ENCODE measurements at regions of chr20 and their contacts with region 1.

Region 1: DNA sequence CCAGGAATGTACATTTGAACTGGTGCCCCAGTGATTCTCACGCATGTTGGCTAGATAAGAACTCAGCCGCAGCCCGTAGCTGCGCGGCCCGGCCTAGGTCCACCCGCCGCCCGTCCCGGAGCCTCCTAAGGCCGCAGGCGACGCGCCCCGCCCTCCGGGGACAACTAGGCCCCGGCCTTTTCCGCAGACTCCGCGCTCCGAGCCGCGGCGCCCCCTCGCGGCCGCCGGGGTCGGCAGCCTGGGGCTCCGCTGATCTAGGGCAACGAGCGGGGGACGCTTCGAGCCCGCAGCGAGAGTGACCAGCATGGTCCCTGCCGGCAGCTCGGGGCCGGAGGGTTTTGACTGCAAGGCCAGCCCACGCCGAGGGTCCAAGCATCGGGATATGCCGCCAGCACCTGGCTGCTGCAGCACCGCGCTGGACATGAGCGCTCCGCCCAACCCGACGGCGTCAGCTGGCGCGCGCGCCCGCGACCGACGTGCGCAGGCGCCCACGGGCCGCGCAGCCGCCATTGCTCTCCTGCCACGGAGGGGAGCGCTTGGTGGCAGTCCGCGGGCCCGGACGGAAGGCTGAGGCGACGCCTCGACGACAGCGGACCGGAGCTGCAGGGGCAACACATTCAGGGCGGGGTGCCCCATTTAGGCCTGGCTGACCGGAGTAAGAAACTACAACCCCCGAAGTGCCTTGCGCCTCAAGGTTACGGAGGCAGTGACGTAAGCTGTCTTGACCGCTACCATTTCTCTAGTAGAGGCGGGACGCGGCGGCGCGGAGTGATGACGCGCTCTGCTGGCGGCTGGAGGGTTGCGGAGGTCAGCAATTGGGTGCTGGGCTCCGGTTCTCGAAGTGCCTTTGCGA is at the start of gene AP5S1:
- DNase-seq: peak; percentile 97
- ATAC-seq: peak; percentile 77
- H3K4me3 ChIP-seq: peak within 1 kb of the TSS; percentile 91 to 95 (median 94)
- H3K27ac ChIP-seq: peak within 1 kb of the TSS; percentile 96
- H3K4me1 ChIP-seq: peaks cover 32% of the 10 kb centered on the region
- H3K27me3 ChIP-seq: peaks cover 1 to 10% of the 10 kb centered on the region in 2 experiments; a peak in 2 of 5 replicates
- CTCF ChIP-seq: peak; percentile 97
- EP300 ChIP-seq: peak in 1 of 2 experiments; percentile 54; a peak in 2 of 4 replicates
- POLR2A ChIP-seq: peak; percentile 97
- RAD21 ChIP-seq: peak; percentile 100
- total RNA-seq, gene AP5S1: 23.2 and 23.7 TPM in 2 replicates

Region 2: GRCh38 chr20:3721912-3722311 is 98.4 kb before region 1 on chr20:
- CTCF ChIA-PET with region 1: no interaction called
- POLR2A ChIA-PET with region 1: no interaction called
- in situ Hi-C with region 1: no loop called
- intact Hi-C with region 1: no loop called
- DNase-seq: no peak
- ATAC-seq: no peak
- H3K4me3 ChIP-seq: no peak overlapping the region
- H3K27ac ChIP-seq: no peak overlapping the region
- H3K4me1 ChIP-seq: no peaks in the 10 kb centered on the region
- H3K27me3 ChIP-seq: peaks cover 0 to 9% of the 10 kb centered on the region in 2 experiments
- CTCF ChIP-seq: no peak
- EP300 ChIP-seq: no peak
- POLR2A ChIP-seq: no peak
- RAD21 ChIP-seq: no peak

Region 3: GRCh38 chr20:3753098-3753980 is 66.9 kb before region 1 on chr20:
- CTCF ChIA-PET with region 1: interaction called, 7 read pairs
- POLR2A ChIA-PET with region 1: no interaction called
- in situ Hi-C with region 1: no loop called
- intact Hi-C with region 1: loop called (anchors 2 kb)
- DNase-seq: peak; percentile 71
- ATAC-seq: peak; percentile 54
- H3K4me3 ChIP-seq: no peak overlapping the region
- H3K27ac ChIP-seq: no peak overlapping the region
- H3K4me1 ChIP-seq: peaks cover 19% of the 10 kb centered on the region
- H3K27me3 ChIP-seq: peaks cover 2 to 9% of the 10 kb centered on the region in 2 experiments; a peak in 4 of 5 replicates
- CTCF ChIP-seq: peak; percentile 91
- EP300 ChIP-seq: no peak
- POLR2A ChIP-seq: no peak
- RAD21 ChIP-seq: peak; percentile 84

Region 4: DNA sequence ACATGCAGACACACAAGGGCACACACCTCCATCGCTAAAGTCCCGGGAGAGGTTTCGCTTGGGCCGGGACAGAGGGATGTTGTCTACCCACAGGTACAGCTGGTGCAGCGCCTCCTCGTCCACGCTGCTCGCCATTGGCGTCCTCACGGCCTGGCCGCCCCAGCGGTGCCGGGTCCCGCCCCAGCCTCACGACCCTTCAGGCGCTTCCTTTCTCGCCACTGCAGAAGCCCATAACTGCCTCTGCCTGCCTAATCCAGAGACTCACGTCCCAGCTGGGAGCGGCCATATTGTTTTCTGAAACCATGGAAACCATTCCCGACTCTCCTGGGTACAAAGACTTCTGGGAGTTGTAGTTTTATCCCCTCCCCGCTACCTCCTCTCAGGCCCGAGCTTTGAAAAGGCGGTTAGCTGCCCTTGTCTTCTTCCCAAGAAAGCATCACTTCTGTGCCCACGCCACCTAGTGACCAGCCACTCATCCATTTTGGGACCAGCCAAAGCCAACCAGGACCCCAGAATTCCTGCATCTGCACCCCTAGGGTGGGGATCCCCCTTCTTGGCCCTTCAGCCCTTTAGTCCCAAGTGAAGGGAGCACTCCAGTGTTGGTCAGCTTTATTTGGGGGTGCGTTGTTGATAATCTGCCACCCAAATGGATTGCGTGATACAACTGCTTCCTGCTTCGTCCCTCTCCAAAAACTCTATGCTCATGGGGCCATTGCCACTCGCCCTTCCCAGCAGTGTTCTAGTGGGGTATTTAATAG is 38.9 kb before region 1 on chr20 and contains the start of gene SPEF1:
- CTCF ChIA-PET with region 1: interaction called, 119 read pairs
- POLR2A ChIA-PET with region 1: interaction called, 134 read pairs
- in situ Hi-C with region 1: loop called (anchors 5 kb)
- intact Hi-C with region 1: no loop called
- DNase-seq: peak; percentile 98
- ATAC-seq: peak; percentile 80
- H3K4me3 ChIP-seq: peak within 1 kb of the TSS; percentile 51 to 75 (median 59); a peak in 5 of 6 replicates
- H3K27ac ChIP-seq: no peak within 1 kb of the TSS
- H3K4me1 ChIP-seq: peaks cover 76% of the 10 kb centered on the region
- H3K27me3 ChIP-seq: peaks cover 2 to 31% of the 10 kb centered on the region in 2 experiments
- CTCF ChIP-seq: peak; percentile 79
- EP300 ChIP-seq: no peak
- POLR2A ChIP-seq: no peak
- RAD21 ChIP-seq: peak; percentile 63
- total RNA-seq, gene SPEF1: 0.27 and 0.32 TPM in 2 replicates

Region 5: GRCh38 chr20:3795511-3796468 is 24.5 kb before region 1 on chr20 and contains the start of gene CDC25B:
- CTCF ChIA-PET with region 1: interaction called, 3 read pairs
- POLR2A ChIA-PET with region 1: interaction called, 134 read pairs
- in situ Hi-C with region 1: no loop called
- intact Hi-C with region 1: loop called (anchors 1 kb)
- DNase-seq: peak; percentile 91
- ATAC-seq: peak; percentile 89
- H3K4me3 ChIP-seq: peak within 1 kb of the TSS; percentile 76 to 88 (median 85)
- H3K27ac ChIP-seq: peak within 1 kb of the TSS; percentile 66
- H3K4me1 ChIP-seq: peaks cover 45% of the 10 kb centered on the region
- H3K27me3 ChIP-seq: no peaks in the 10 kb centered on the region; a peak in 1 of 5 replicates
- CTCF ChIP-seq: peak; percentile 57
- EP300 ChIP-seq: peak in 1 of 2 experiments; percentile 31; a peak in 1 of 4 replicates
- POLR2A ChIP-seq: peak; percentile 75 to 77
- RAD21 ChIP-seq: peak; percentile 63
- total RNA-seq, gene CDC25B: 14.5 and 19.3 TPM in 2 replicates

Region 6: GRCh38 chr20:3854462-3854871 is 34.2 kb after region 1 on chr20:
- CTCF ChIA-PET with region 1: interaction called, 11 read pairs
- POLR2A ChIA-PET with region 1: interaction called, 10 read pairs
- in situ Hi-C with region 1: no loop called
- intact Hi-C with region 1: no loop called
- DNase-seq: peak; percentile 70
- ATAC-seq: peak; percentile 65
- H3K4me3 ChIP-seq: no peak overlapping the region
- H3K27ac ChIP-seq: peak overlapping the region; percentile 22
- H3K4me1 ChIP-seq: peaks cover 24% of the 10 kb centered on the region
- H3K27me3 ChIP-seq: no peaks in the 10 kb centered on the region
- CTCF ChIP-seq: no peak
- EP300 ChIP-seq: peak in 1 of 2 experiments; percentile 31; a peak in 1 of 4 replicates
- POLR2A ChIP-seq: no peak
- RAD21 ChIP-seq: no peak

Region 7: GRCh38 chr20:3901028-3901705 is 80.9 kb after region 1 on chr20:
- CTCF ChIA-PET with region 1: no interaction called
- POLR2A ChIA-PET with region 1: no interaction called
- in situ Hi-C with region 1: no loop called
- intact Hi-C with region 1: no loop called
- DNase-seq: no peak
- ATAC-seq: no peak
- H3K4me3 ChIP-seq: no peak overlapping the region
- H3K27ac ChIP-seq: no peak overlapping the region
- H3K4me1 ChIP-seq: peaks cover 86% of the 10 kb centered on the region
- H3K27me3 ChIP-seq: no peaks in the 10 kb centered on the region
- CTCF ChIP-seq: no peak
- EP300 ChIP-seq: no peak
- POLR2A ChIP-seq: no peak
- RAD21 ChIP-seq: no peak

Measured in HepG2 (cell line).